CD4-positive, alpha-beta T cell (primary cell): ENCODE measurements at regions of chr1 and their contacts with region 1.

Region 1: GRCh38 chr1:167066333-167067122 is 23.6 kb downstream of the GPA33 start:
- DNase-seq: peak; percentile 53 to 89 (median 79)
- ATAC-seq: peak; percentile 98
- H3K4me3 ChIP-seq: peak overlapping the region; percentile 15
- H3K4me3 Mint-ChIP-seq: no peak overlapping the region
- H3K27ac ChIP-seq: no peak overlapping the region
- H3K27ac Mint-ChIP-seq: no peak overlapping the region
- H3K4me1 ChIP-seq: peaks cover 6% of the 10 kb centered on the region
- H3K4me1 Mint-ChIP-seq: no peaks in the 10 kb centered on the region
- H3K27me3 ChIP-seq: no peaks in the 10 kb centered on the region
- H3K27me3 Mint-ChIP-seq: no peaks in the 10 kb centered on the region
- CTCF ChIP-seq: peak; percentile 96

Region 2: DNA sequence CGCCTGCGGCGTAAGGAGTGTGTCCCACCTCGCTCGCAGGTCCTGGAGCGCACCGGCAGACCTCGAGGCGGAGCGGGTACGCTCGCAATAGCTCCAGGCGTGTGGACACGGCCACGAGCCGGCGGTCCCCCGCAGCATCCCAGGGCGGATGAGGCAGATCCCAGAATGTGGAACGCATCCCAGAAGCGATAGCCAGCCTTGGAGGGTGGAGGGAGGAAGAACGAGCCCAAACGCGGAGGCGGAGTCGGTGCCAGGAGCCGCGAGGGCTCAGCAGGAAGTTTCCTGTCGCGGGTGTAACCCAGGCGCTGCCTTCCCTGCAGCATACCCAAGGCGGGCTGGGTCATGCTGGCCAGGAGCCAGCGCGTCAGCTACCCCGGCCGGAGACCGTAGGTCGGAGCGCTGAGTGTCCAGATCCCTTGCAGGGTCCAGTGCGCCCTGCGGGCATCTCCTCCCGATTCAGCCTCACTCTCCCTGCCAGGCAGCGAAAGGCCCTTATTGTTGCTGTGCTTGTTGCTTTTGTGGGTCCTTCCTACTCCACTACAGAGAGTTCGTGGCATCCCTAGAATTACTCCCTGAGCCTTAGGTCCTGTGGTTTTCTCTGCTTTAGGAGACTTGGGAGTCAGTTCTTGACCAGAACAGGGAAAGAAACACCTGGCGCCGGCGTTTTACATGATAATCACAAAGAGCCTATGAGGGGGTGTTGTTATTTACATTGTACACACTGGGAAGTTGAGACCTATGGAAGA is 55.0 kb after region 1 on chr1:
- CTCF ChIA-PET with region 1: interaction called, 4 read pairs
- POLR2A ChIA-PET with region 1: interaction called, 6 read pairs
- intact Hi-C with region 1: loop called (anchors 1 kb)
- DNase-seq: peak in 13 of 14 experiments; percentile 10 to 65 (median 32)
- ATAC-seq: peak; percentile 74
- H3K4me3 ChIP-seq: peak overlapping the region; percentile 64
- H3K4me3 Mint-ChIP-seq: peak overlapping the region; percentile 87
- H3K27ac ChIP-seq: no peak overlapping the region
- H3K27ac Mint-ChIP-seq: no peak overlapping the region
- H3K4me1 ChIP-seq: peaks cover 12% of the 10 kb centered on the region
- H3K4me1 Mint-ChIP-seq: peaks cover 12% of the 10 kb centered on the region
- H3K27me3 ChIP-seq: no peaks in the 10 kb centered on the region
- H3K27me3 Mint-ChIP-seq: peaks cover 9% of the 10 kb centered on the region
- CTCF ChIP-seq: no peak

Region 3: GRCh38 chr1:167270349-167271092 is 204.0 kb after region 1 on chr1:
- CTCF ChIA-PET with region 1: interaction called, 4 read pairs
- POLR2A ChIA-PET with region 1: no interaction called
- intact Hi-C with region 1: loop called in 1 of 2 experiments (anchors 5 kb)
- DNase-seq: no peak
- ATAC-seq: no peak
- H3K4me3 ChIP-seq: no peak overlapping the region
- H3K4me3 Mint-ChIP-seq: no peak overlapping the region
- H3K27ac ChIP-seq: no peak overlapping the region
- H3K27ac Mint-ChIP-seq: no peak overlapping the region
- H3K4me1 ChIP-seq: peaks cover 5% of the 10 kb centered on the region
- H3K4me1 Mint-ChIP-seq: peaks cover 53% of the 10 kb centered on the region
- H3K27me3 ChIP-seq: no peaks in the 10 kb centered on the region
- H3K27me3 Mint-ChIP-seq: no peaks in the 10 kb centered on the region
- CTCF ChIP-seq: no peak

Region 4: DNA sequence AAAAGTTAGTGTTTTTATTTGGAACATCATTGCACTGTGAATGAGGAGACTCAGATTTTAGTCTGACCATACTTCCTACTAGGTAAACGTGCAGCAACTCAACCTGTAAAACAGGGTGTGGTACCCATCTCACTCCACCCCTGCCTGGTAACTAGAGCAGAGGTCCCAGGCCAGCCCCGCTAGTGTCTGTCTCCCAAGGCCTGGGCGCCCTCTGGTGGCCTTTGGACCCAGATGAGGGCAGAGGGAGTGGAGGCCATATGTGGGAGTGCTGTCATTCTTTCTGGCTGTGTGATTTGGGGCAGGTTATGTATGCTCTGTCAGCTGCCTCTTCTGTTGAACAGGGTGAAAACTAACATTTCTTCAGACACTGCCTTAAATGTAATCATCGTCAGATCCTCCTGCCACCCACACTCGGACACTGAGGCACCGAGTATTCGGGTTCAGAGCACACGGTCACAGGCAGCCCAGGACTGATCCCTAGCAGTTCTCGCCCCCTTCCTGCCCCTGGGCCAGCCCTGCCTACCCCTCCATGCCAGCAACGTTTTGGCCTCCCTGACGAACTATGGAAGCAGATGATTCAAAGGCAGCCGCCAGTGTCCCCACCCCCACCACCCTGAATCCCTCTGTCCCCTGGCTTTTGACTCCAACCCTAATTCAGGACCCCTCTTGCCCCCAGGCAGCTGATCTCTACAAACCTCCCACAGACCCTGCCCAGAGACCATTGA is 375.8 kb after region 1 on chr1:
- CTCF ChIA-PET with region 1: no interaction called
- POLR2A ChIA-PET with region 1: no interaction called
- intact Hi-C with region 1: loop called in 1 of 2 experiments (anchors 10 kb)
- DNase-seq: peak; percentile 79 to 92 (median 88)
- ATAC-seq: peak; percentile 84
- H3K4me3 ChIP-seq: no peak overlapping the region
- H3K4me3 Mint-ChIP-seq: peak overlapping the region; percentile 45
- H3K27ac ChIP-seq: peak overlapping the region in 1 of 2 donors; percentile 41
- H3K27ac Mint-ChIP-seq: peak overlapping the region; percentile 100
- H3K4me1 ChIP-seq: peaks cover 91% of the 10 kb centered on the region
- H3K4me1 Mint-ChIP-seq: peaks cover 89% of the 10 kb centered on the region
- H3K27me3 ChIP-seq: no peaks in the 10 kb centered on the region
- H3K27me3 Mint-ChIP-seq: no peaks in the 10 kb centered on the region
- CTCF ChIP-seq: peak; percentile 86

Region 5: DNA sequence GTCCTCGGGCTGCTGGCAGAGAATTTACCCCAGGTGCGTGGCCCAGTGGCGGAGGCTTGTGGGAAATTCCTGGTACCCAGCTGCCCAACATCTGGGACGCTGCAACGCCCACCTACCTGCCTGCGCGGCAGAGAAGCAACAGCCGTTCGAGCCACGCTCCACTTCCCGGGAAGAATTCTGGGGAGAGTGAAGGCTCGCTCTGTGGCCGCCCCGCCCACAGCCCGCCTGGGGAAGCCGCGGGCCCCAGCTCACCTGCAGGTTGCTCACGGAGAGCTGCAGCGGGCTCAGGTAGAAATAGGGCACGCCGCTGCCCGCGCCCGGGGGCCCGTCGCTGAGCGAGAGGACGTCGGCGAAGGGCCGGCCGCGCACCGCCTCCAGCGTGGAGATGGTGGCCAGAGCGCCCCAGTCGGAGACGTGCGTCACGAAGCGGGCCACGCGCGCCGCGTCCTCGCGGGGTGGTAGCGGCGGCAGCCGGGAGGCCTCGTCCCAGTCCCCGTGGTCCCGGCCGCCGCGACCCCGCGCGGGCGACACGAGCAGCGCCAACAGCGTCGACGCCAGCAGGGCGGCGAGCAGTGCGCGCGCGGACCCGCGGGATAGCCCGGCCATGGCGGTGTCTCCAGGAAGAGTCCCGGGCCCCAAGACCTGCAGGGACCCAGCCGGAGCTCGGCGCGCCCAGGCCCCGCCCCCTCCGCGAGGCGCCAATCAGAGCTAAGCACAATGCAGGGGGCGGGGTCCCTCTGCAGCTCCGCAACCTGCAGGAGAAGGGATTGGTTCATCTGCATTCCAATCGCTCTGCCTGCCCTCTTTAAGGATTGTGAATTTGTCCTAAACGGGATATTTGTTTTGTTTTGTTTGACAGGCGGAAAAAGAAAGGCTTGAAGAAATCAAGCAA is 486.9 kb after region 1 on chr1 and contains the start of gene CREG1:
- CTCF ChIA-PET with region 1: no interaction called
- POLR2A ChIA-PET with region 1: no interaction called
- intact Hi-C with region 1: loop called (anchors 1 to 5 kb)
- DNase-seq: peak; percentile 76 to 95 (median 86)
- ATAC-seq: peak; percentile 97
- H3K4me3 ChIP-seq: peak within 1 kb of the TSS; percentile 75
- H3K4me3 Mint-ChIP-seq: peak within 1 kb of the TSS; percentile 96
- H3K27ac ChIP-seq: peak within 1 kb of the TSS in 1 of 2 donors; percentile 25
- H3K27ac Mint-ChIP-seq: peak within 1 kb of the TSS; percentile 81
- H3K4me1 ChIP-seq: peaks cover 25% of the 10 kb centered on the region
- H3K4me1 Mint-ChIP-seq: peaks cover 42% of the 10 kb centered on the region
- H3K27me3 ChIP-seq: no peaks in the 10 kb centered on the region
- H3K27me3 Mint-ChIP-seq: no peaks in the 10 kb centered on the region
- CTCF ChIP-seq: no peak
- total RNA-seq, gene CREG1: 10.7 to 11.2 TPM